Heart left ventricle (tissue), 16 donors: ENCODE measurements at regions of chr10 and their contacts with region 1.

Region 1: GRCh38 chr10:122557516-122557915 is 3.0 kb upstream of the DMBT1 start:
- DNase-seq: no peak
- ATAC-seq: no peak
- H3K4me3 ChIP-seq: no peak overlapping the region
- H3K27ac ChIP-seq: no peak overlapping the region
- H3K4me1 ChIP-seq: no peaks in the 10 kb centered on the region
- H3K27me3 ChIP-seq: peaks cover 0 to 6% (median 0%) of the 10 kb centered on the region in 9 donors
- CTCF ChIP-seq: no peak
- POLR2A ChIP-seq: no peak

Region 2: GRCh38 chr10:121751191-121751760 is 806.2 kb before region 1 on chr10:
- intact Hi-C with region 1: no loop called
- DNase-seq: no peak
- ATAC-seq: no peak
- H3K4me3 ChIP-seq: no peak overlapping the region
- H3K27ac ChIP-seq: no peak overlapping the region
- H3K4me1 ChIP-seq: peaks cover 0 to 12% (median 4%) of the 10 kb centered on the region in 12 donors
- H3K27me3 ChIP-seq: no peaks in the 10 kb centered on the region
- CTCF ChIP-seq: no peak
- POLR2A ChIP-seq: no peak

Region 3: DNA sequence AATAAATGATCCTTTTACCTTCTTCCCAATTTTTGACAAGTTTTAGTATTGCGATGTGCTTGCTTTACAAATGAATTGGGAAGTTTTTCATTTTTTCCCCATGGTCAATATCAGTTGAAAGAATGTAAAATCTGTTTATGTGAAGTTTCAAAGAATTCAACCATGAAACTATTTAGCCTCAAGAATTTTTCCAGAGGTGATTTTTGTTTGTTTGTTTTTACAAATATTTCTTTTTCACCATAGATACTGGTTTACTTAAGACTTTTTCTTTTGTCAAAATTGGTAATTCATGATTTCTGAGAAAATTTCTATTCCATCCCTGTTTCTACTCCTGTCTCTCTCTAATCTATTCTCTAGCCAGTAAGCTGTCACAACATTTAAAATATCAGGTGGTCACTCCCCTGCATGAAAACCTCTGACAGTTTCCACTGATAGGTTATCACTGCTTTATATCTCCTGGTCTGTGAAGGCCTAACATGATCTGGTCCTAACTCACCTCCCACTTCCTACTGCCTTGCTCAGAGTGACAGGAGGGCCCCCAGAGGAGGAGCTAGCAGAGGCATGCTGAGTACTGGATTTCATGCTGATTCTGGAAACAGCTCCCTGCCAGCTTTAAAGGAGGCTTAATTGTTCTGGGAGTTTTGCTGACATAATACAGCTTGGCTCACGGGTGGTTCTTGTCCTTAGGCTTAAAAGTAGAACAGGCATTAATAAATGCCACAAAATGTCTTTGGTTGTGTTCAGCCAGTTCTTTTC is 110.7 kb before region 1 on chr10:
- intact Hi-C with region 1: loop called in 2 of 10 experiments (anchors 5 to 10 kb)
- DNase-seq: no peak
- ATAC-seq: peak; percentile 64 to 89 (median 80)
- H3K4me3 ChIP-seq: no peak overlapping the region
- H3K27ac ChIP-seq: peak overlapping the region in 3 of 12 donors; percentile 15 to 39 (median 39)
- H3K4me1 ChIP-seq: peaks cover 0 to 35% (median 7%) of the 10 kb centered on the region in 12 donors
- H3K27me3 ChIP-seq: no peaks in the 10 kb centered on the region
- CTCF ChIP-seq: no peak
- POLR2A ChIP-seq: no peak